ENCODE measurements at regions of chr17 and their contacts with region 1.

Region 1: DNA sequence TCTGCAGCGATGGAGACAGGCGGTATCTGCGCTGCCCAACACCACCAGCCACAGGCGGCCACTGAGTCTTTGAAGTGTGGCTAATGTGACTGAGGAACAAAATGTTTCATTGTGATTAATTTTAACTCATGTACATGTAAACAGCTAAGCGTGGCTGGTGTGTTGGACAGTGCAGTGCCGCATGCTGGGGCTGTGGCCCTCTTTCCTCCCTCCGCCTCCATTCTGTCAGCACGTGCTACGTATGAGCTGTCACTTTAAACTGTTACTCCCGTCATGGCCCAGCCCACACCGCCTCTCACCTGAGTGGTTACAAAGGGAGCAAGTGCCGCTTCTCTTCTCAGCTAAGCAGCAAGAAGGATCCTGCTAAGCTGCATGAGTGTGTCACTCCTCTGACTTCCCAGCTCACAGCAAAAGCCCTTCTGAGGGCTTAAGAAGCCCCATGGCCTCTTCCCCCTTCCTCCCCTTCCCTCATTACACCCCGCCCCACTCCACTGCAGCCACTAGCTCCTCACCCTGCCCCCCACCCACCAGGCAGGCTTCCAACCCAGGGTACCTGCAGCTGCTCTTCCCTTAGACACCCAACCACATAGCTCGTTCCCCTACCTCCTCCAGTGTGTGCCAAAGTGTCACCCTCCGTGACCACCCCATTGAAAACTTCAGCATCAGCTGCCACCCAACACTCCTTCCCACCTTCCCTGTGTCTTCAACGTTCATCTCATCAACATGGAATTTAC is 15.0 kb downstream of the HASPIN start:
- DNase-seq: peak; percentile 10
- ATAC-seq: peak; percentile 16
- H3K4me3 ChIP-seq: no peak overlapping the region
- H3K27ac ChIP-seq: no peak overlapping the region
- H3K4me1 ChIP-seq: peaks cover 7% of the 10 kb centered on the region; the same call in 1 of the 2 replicates
- H3K27me3 ChIP-seq: peaks cover 9% of the 10 kb centered on the region; the same call in 1 of the 2 replicates
- CTCF ChIP-seq: no peak
- POLR2A ChIP-seq: no peak
- RAD21 ChIP-seq: no peak

Region 2: GRCh38 chr17:3695723-3696411 is 42.9 kb before region 1 on chr17 and contains the start of gene P2RX5:
- CTCF ChIA-PET with region 1: no interaction called
- POLR2A ChIA-PET with region 1: no interaction called
- dilution Hi-C with region 1: no loop called
- in situ Hi-C with region 1: no loop called
- intact Hi-C with region 1: loop called (anchors 1 kb)
- DNase-seq: no peak
- ATAC-seq: peak; percentile 82
- H3K4me3 ChIP-seq: peak within 1 kb of the TSS; percentile 79
- H3K27ac ChIP-seq: no peak within 1 kb of the TSS; the same call in 1 of the 2 replicates
- H3K4me1 ChIP-seq: peaks cover 4% of the 10 kb centered on the region; the same call in 1 of the 2 replicates
- H3K27me3 ChIP-seq: peaks cover 17% of the 10 kb centered on the region
- CTCF ChIP-seq: no peak
- POLR2A ChIP-seq: no peak
- RAD21 ChIP-seq: no peak
- total RNA-seq, gene P2RX5: 1.7 and 1.8 TPM in 2 replicates

Region 3: DNA sequence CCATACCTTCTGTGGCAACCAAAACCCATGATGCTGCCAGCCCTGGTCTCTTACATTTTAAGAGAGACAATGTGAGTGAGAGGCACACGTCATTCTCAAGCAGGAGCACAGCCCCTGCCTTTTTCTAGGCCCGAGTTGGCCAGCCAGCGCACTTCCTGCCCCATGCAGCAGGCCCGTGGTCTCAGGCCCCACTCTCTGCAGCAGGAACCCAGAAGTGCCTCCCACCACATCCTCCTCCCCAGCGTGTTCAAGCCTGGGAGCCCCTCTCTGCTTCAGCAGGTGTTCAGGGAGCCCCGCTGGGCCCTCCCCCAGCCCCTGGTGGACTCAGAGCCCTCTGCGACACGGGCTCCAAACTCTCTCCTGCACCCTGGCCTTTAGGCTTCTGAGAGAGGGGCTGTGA is 31.7 kb after region 1 on chr17:
- CTCF ChIA-PET with region 1: no interaction called
- POLR2A ChIA-PET with region 1: no interaction called
- dilution Hi-C with region 1: no loop called
- in situ Hi-C with region 1: no loop called
- intact Hi-C with region 1: no loop called
- DNase-seq: no peak
- ATAC-seq: no peak
- H3K4me3 ChIP-seq: no peak overlapping the region
- H3K27ac ChIP-seq: no peak overlapping the region
- H3K4me1 ChIP-seq: peaks cover 9% of the 10 kb centered on the region; the same call in 1 of the 2 replicates
- H3K27me3 ChIP-seq: no peaks in the 10 kb centered on the region; the same call in 1 of the 2 replicates
- CTCF ChIP-seq: no peak
- POLR2A ChIP-seq: no peak
- RAD21 ChIP-seq: no peak

Region 4: GRCh38 chr17:3780986-3781385 is 42.3 kb after region 1 on chr17:
- CTCF ChIA-PET with region 1: no interaction called
- POLR2A ChIA-PET with region 1: no interaction called
- dilution Hi-C with region 1: no loop called
- in situ Hi-C with region 1: no loop called
- intact Hi-C with region 1: no loop called
- DNase-seq: no peak
- ATAC-seq: no peak
- H3K4me3 ChIP-seq: no peak overlapping the region
- H3K27ac ChIP-seq: no peak overlapping the region
- H3K4me1 ChIP-seq: no peaks in the 10 kb centered on the region
- H3K27me3 ChIP-seq: no peaks in the 10 kb centered on the region; the same call in 1 of the 2 replicates
- CTCF ChIP-seq: no peak
- POLR2A ChIP-seq: no peak
- RAD21 ChIP-seq: no peak

Region 5: GRCh38 chr17:3827124-3827773 is 88.5 kb after region 1 on chr17:
- CTCF ChIA-PET with region 1: interaction called, 17 read pairs
- POLR2A ChIA-PET with region 1: interaction called, 13 read pairs
- dilution Hi-C with region 1: no loop called
- in situ Hi-C with region 1: loop called (anchors 5 kb)
- intact Hi-C with region 1: loop called (anchors 1 kb)
- DNase-seq: peak; percentile 66
- ATAC-seq: no peak
- H3K4me3 ChIP-seq: no peak overlapping the region
- H3K27ac ChIP-seq: no peak overlapping the region
- H3K4me1 ChIP-seq: peaks cover 10% of the 10 kb centered on the region
- H3K27me3 ChIP-seq: no peaks in the 10 kb centered on the region
- CTCF ChIP-seq: peak; percentile 64
- POLR2A ChIP-seq: no peak
- RAD21 ChIP-seq: peak; percentile 82

Region 6: DNA sequence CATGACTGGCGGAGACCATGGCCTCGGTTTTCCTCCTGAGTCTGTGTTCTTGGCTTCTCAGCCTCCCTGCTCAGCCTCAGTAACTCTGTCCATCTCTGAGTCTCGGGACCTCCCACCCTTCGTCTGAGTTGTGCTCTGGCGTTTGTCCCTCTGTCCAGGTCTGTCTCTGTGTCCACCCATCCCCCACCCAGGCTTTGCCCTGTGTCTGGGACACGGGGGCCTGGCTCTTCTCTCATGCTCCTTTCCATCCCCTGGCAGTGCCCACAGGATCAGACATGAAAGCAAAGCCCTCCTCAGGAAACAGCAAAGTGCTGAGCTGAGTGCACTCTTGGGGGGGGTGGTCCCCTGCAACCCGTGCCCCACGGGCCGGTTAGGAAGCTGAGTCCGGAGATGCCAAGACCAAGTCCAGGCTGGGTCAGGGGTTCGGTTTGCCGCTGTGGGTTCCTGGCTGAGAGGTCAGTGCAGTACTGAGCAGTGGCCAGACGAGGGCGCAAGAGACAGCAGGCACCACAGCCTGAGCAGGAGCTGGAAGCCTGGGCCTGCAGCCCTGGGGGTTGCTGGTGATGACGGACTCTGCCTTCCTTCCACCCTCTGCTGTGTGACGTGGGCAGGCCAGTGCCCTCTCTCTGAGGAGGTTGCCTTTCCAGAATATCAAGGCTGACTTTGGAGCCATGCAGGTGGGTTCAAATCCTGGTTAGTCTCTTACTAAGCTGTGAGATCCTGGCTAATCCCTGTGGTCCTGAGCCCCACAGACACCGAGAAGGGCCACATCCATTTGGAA is 175.0 kb after region 1 on chr17:
- CTCF ChIA-PET with region 1: interaction called, 12 read pairs
- POLR2A ChIA-PET with region 1: no interaction called
- dilution Hi-C with region 1: no loop called
- in situ Hi-C with region 1: no loop called
- intact Hi-C with region 1: loop called (anchors 1 kb)
- DNase-seq: peak; percentile 76
- ATAC-seq: peak; percentile 100
- H3K4me3 ChIP-seq: no peak overlapping the region
- H3K27ac ChIP-seq: no peak overlapping the region
- H3K4me1 ChIP-seq: peaks cover 5% of the 10 kb centered on the region; the same call in 1 of the 2 replicates
- H3K27me3 ChIP-seq: no peaks in the 10 kb centered on the region
- CTCF ChIP-seq: peak; percentile 95
- POLR2A ChIP-seq: peak; percentile 53; the same call in 1 of the 2 replicates
- RAD21 ChIP-seq: peak; percentile 96

Region 7: GRCh38 chr17:4004517-4005295 is 266.0 kb after region 1 on chr17:
- CTCF ChIA-PET with region 1: interaction called, 8 read pairs
- POLR2A ChIA-PET with region 1: no interaction called
- dilution Hi-C with region 1: no loop called
- in situ Hi-C with region 1: loop called (anchors 25 kb)
- intact Hi-C with region 1: loop called (anchors 5 kb)
- DNase-seq: no peak
- ATAC-seq: no peak
- H3K4me3 ChIP-seq: no peak overlapping the region
- H3K27ac ChIP-seq: no peak overlapping the region
- H3K4me1 ChIP-seq: peaks cover 23% of the 10 kb centered on the region
- H3K27me3 ChIP-seq: no peaks in the 10 kb centered on the region
- CTCF ChIP-seq: peak; percentile 63
- POLR2A ChIP-seq: no peak
- RAD21 ChIP-seq: peak; percentile 62